ENCODE measurements at regions of chr2 and their contacts with region 1.

Region 1: GRCh38 chr2:218292048-218293014 is at the start of gene TMBIM1:
- DNase-seq: peak; percentile 95
- ATAC-seq: peak; percentile 94
- total RNA-seq, gene TMBIM1: 138 TPM

Region 2: GRCh38 chr2:218367415-218368153 is 75.3 kb after region 1 on chr2:
- intact Hi-C with region 1: loop called (anchors 5 kb)
- DNase-seq: peak; percentile 97
- ATAC-seq: peak; percentile 97

Region 3: GRCh38 chr2:218395797-218396687 is 103.7 kb after region 1 on chr2:
- intact Hi-C with region 1: loop called (anchors 2 kb)
- DNase-seq: peak; percentile 95
- ATAC-seq: peak; percentile 66

Region 4: GRCh38 chr2:218466016-218466521 is 173.7 kb after region 1 on chr2:
- intact Hi-C with region 1: loop called (anchors 5 kb)
- DNase-seq: no peak
- ATAC-seq: no peak

Measured in Right ventricle myocardium inferior (tissue), 1 donor.